Colonic mucosa (tissue), 4 donors: ENCODE measurements at regions of chr5 and their contacts with region 1.

Region 1: GRCh38 chr5:96614110-96614691 is 48.0 kb upstream of the CAST start:
- DNase-seq: peak; percentile 83
- H3K4me3 ChIP-seq: no peak overlapping the region
- H3K27ac ChIP-seq: peak overlapping the region; percentile 60
- H3K4me1 ChIP-seq: no peaks in the 10 kb centered on the region
- H3K27me3 ChIP-seq: no peaks in the 10 kb centered on the region
- CTCF ChIP-seq: peak; percentile 47

Region 2: GRCh38 chr5:96687812-96688453 is 73.7 kb after region 1 on chr5:
- intact Hi-C with region 1: loop called (anchors 5 kb)
- DNase-seq: no peak
- H3K4me3 ChIP-seq: no peak overlapping the region
- H3K27ac ChIP-seq: no peak overlapping the region
- H3K4me1 ChIP-seq: peaks cover 4% of the 10 kb centered on the region
- H3K27me3 ChIP-seq: no peaks in the 10 kb centered on the region
- CTCF ChIP-seq: peak; percentile 40

Region 3: DNA sequence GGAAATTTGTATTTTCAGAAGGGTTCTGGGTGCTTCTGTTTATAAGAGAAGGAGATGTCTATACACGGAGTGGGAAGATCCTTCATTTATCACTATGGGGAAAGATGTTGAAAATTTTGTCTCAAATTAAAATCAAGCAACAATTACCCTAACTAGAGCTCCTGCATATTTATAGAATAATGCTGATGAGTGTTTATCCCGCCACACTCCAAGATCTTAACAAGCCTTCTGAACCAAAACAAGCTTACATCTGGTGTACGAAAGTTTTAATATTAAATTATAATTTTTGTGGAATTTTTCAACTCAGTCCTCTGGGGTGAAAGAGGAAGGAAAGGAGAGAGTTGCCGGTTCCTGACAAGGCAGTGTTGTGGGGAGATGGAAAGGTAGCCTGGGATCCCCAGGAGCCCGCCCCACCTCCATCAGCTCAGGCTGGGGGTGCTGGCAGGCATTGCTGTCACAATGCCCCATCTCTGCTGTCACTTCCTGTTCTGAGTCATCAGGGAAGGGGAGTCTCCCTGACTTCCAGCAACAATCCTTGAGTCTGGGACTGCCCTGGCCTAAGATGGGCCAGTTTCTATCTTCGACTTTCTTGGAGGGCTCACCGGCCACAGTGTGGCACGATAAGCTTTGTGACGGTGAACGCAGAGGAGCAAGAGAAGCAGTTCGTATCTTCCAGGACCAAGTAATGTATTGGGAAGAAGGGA is 129.0 kb after region 1 on chr5:
- intact Hi-C with region 1: loop called (anchors 10 kb)
- DNase-seq: peak; percentile 28
- H3K4me3 ChIP-seq: no peak overlapping the region
- H3K27ac ChIP-seq: peak overlapping the region; percentile 11
- H3K4me1 ChIP-seq: no peaks in the 10 kb centered on the region
- H3K27me3 ChIP-seq: no peaks in the 10 kb centered on the region
- CTCF ChIP-seq: no peak

Region 4: DNA sequence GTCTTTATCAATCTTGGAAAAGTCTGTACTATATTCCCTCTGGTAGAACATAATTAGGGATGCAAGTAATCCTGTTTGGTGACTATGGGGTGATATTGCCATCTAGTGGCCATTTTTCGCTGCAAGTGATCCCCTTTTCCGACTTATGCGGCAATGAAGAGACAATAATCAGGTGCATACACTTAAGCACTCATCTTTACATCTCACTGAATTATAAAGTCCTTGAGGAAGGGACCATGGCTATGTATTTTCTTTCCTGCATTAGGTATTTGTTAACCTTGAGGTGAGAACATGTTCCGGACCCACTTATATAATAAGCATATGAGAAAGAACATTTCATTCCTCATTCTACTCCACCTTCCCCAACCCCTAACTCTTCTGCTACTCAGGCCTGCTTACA is 547.8 kb after region 1 on chr5:
- intact Hi-C with region 1: loop called (anchors 10 kb)
- DNase-seq: peak; percentile 80
- H3K4me3 ChIP-seq: no peak overlapping the region
- H3K27ac ChIP-seq: no peak overlapping the region
- H3K4me1 ChIP-seq: no peaks in the 10 kb centered on the region
- H3K27me3 ChIP-seq: no peaks in the 10 kb centered on the region
- CTCF ChIP-seq: peak; percentile 91